Adrenal gland (tissue), 19 donors: ENCODE measurements at regions of chr3 and their contacts with region 1.

Region 1: DNA sequence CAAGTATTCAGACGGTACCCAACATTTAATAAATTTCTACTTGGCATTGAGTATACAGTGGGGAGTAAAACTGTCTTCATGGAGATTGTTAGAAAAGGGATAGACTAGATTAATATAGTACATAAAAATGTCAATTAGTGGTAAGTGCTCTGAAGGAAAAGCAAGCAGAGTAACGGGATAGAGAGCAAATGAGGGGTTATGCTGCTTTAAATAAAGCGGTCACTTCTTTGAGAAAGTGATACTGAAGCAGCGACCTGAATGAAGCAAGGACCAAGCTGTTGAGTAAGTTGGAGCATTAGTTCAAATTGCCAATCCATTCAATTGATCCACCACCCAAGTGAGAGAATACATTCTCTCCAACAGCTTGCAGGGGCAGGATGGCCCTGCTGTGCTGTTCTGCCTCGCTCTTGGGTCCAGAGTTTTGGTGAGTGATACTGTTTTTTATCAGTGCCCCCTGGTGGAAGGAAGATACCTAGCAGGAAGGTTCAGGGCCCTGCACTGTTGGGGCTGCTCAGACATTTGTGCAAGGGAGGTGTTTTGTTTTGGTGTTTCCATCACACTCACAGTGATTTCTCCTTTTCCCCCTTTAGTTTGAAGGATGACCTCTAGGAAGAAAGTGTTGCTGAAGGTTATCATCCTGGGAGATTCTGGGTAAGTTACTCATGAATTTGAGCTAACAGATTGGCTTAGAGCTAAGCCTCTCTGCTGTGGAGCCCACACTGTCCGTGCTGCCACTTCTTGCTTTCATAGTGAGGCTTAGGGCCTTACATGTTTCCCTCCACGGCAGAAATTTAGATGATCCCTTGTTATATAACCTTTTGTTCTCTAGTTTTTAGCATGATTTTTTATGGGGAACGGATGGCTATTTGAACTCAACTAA is 69.0 kb downstream of the RAB7A start:
- DNase-seq: peak; percentile 54 to 80 (median 71)
- H3K4me3 ChIP-seq: no peak overlapping the region
- H3K27ac ChIP-seq: peak overlapping the region in 4 of 5 donors; percentile 26 to 66 (median 35)
- H3K4me1 ChIP-seq: peaks cover 7 to 29% of the 10 kb centered on the region in 2 donors
- H3K27me3 ChIP-seq: no peaks in the 10 kb centered on the region
- CTCF ChIP-seq: peak; percentile 67 to 89 (median 80)
- POLR2A ChIP-seq: no peak

Region 2: GRCh38 chr3:128680602-128681368 is 114.2 kb before region 1 on chr3:
- intact Hi-C with region 1: loop called (anchors 5 to 10 kb)
- DNase-seq: peak; percentile 99
- H3K4me3 ChIP-seq: peak overlapping the region; percentile 0 to 65 (median 59)
- H3K27ac ChIP-seq: peak overlapping the region; percentile 23 to 97 (median 94)
- H3K4me1 ChIP-seq: peaks cover 4 to 11% of the 10 kb centered on the region in 2 donors
- H3K27me3 ChIP-seq: no peaks in the 10 kb centered on the region
- CTCF ChIP-seq: peak; percentile 92 to 100 (median 100)
- POLR2A ChIP-seq: peak; percentile 88 to 89